ENCODE measurements at regions of chr12 and their contacts with region 1.

Region 1: GRCh38 chr12:32586390-32586789 is 92.7 kb upstream of the DNM1L start:
- DNase-seq: no peak
- H3K4me3 Mint-ChIP-seq: peak overlapping the region; percentile 15
- H3K27ac Mint-ChIP-seq: peak overlapping the region; percentile 82
- H3K4me1 Mint-ChIP-seq: peaks cover 65% of the 10 kb centered on the region
- H3K27me3 Mint-ChIP-seq: no peaks in the 10 kb centered on the region

Region 2: DNA sequence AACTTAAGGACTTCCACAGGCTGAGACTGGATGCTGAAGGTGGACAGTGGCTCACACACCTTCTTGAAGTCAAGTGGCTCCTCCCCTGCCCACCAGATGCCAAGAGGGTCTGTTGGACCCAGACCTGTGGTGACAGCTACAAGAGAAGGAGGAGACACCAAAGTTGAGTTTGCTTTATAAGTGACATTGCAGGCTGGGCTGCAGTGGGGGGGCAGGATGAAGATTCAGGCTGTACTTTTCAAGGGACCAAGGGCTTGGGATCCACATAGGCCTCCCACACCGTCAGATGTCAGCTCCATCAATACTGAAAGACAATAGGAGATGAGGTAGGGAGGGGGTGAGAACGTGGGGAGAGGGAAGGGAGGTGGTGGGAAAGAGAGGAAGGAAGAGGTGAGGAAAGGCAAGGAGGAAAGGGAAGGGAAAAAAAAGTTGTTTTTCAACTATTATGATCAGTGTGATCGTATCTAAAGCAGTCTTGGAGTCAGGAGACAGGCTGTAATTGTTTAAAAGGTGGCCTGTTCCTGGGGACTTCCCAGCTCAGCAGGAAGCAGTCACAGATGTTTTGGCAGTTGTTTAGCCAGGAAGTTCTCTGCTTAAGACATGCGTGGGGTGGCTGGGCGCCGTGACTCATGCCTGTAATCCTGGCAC is 711.3 kb before region 1 on chr12:
- intact Hi-C with region 1: loop called (anchors 10 kb)
- DNase-seq: peak; percentile 68
- H3K4me3 Mint-ChIP-seq: peak overlapping the region; percentile 80
- H3K27ac Mint-ChIP-seq: peak overlapping the region; percentile 100
- H3K4me1 Mint-ChIP-seq: peaks cover 30% of the 10 kb centered on the region
- H3K27me3 Mint-ChIP-seq: no peaks in the 10 kb centered on the region

Region 3: GRCh38 chr12:32365473-32366064 is 220.8 kb before region 1 on chr12:
- intact Hi-C with region 1: no loop called
- DNase-seq: peak; percentile 14
- H3K4me3 Mint-ChIP-seq: no peak overlapping the region
- H3K27ac Mint-ChIP-seq: no peak overlapping the region
- H3K4me1 Mint-ChIP-seq: no peaks in the 10 kb centered on the region
- H3K27me3 Mint-ChIP-seq: no peaks in the 10 kb centered on the region

Region 4: GRCh38 chr12:32558903-32559302 is 27.5 kb before region 1 on chr12:
- intact Hi-C with region 1: loop called (anchors 1 kb)
- DNase-seq: no peak
- H3K4me3 Mint-ChIP-seq: no peak overlapping the region
- H3K27ac Mint-ChIP-seq: no peak overlapping the region
- H3K4me1 Mint-ChIP-seq: peaks cover 33% of the 10 kb centered on the region
- H3K27me3 Mint-ChIP-seq: peaks cover 2% of the 10 kb centered on the region

Region 5: GRCh38 chr12:32603858-32604257 is 17.5 kb after region 1 on chr12:
- intact Hi-C with region 1: loop called (anchors 1 kb)
- DNase-seq: peak; percentile 56
- H3K4me3 Mint-ChIP-seq: no peak overlapping the region
- H3K27ac Mint-ChIP-seq: peak overlapping the region; percentile 65
- H3K4me1 Mint-ChIP-seq: peaks cover 18% of the 10 kb centered on the region
- H3K27me3 Mint-ChIP-seq: no peaks in the 10 kb centered on the region

Measured in activated T-helper 1 cell treated with anti-CD3 and anti-CD28 coated beads, Interleukin-12 subunit alpha, Interleukin-12 subunit beta, Interleukin-2, Interleukin-4 antibody, amounts not matched to agents 30 ng/mL and 10 ng/mL and 1 ng/mL, durations not matched to agents 14 hours and 24 hours and 36 hours (primary cell).